B cell (primary cell): ENCODE measurements at regions of chr1 and their contacts with region 1.

Region 1: DNA sequence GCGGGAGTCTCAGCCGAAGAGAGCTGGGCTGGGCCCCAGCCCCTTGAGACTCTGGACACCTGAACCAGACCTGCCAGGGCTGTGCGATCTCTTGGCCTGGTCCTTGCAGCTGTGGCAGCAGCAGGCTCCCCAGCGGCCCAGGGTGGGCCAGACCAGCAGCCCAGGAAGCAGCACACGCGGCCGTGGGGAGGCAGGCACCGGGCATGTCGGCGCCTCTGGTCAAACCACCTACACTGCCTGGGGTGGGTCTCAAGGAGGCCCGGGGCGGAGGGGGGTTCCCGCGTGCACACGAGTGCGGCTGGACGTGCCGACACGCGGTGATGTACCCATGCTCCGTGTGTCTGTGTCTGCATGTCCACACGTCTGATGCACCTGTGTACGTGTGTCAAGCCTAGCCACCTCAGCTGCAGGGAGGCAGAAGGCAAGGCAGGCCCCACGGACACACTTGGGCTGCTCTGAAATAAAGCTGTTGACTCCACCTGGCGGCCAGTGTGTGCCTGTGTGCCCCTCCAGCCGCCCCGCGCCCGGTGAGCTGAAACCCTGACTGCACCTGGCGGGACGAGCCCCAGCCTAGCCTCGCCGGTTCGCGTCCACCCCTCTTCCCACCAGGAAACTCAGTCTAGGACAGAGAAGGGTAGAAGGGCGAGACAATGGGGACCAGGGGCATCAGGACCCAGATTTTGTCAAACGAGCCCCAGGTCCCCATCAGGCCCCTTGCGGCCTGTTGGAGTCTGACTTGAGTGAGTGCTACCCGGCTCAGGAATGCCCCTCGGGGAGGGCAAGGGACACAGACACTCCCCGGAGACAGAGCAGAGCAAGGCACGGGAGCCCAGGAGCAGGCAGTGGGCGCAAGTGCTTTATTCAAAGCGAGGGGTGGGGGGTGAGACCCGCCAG is 11.6 kb downstream of the SCNN1D start:
- DNase-seq: peak; percentile 87
- ATAC-seq: peak; percentile 84
- H3K4me3 ChIP-seq: no peak overlapping the region
- H3K4me3 Mint-ChIP-seq: no peak overlapping the region
- H3K27ac ChIP-seq: no peak overlapping the region
- H3K27ac Mint-ChIP-seq: peak overlapping the region; percentile 50
- H3K4me1 ChIP-seq: peaks cover 0 to 16% of the 10 kb centered on the region in 2 donors
- H3K4me1 Mint-ChIP-seq: peaks cover 11% of the 10 kb centered on the region
- H3K27me3 ChIP-seq: no peaks in the 10 kb centered on the region
- H3K27me3 Mint-ChIP-seq: no peaks in the 10 kb centered on the region
- CTCF ChIP-seq: peak; percentile 74

Region 2: DNA sequence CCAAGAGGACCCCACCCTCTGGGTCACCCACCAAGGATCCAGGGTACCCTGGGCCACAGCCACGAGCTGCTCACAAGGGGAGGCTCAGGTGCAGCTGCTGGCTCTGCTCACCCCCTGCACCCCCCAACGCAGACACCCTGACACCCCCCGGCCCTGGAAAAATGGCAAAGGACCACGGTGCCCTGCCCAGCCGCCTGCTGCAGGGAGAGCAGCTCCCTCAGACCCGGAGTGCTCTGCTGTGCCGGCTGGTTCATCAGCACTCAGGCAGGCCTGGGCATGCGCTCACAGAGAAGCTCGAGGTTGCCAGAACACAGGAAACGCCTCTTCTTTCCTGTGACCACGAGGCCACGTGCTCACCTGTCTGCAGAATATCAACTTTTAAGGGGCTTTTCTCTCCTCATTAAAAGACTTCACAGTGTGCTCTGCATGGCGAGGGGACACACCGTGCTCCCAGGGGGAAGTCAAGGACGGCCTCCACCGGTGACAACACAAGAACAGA is 41.0 kb before region 1 on chr1:
- CTCF ChIA-PET with region 1: interaction called, 17 read pairs
- POLR2A ChIA-PET with region 1: no interaction called
- intact Hi-C with region 1: no loop called
- DNase-seq: peak; percentile 85
- ATAC-seq: peak; percentile 71
- H3K4me3 ChIP-seq: no peak overlapping the region
- H3K4me3 Mint-ChIP-seq: peak overlapping the region; percentile 63
- H3K27ac ChIP-seq: peak overlapping the region; percentile 11 to 84
- H3K27ac Mint-ChIP-seq: peak overlapping the region; percentile 88
- H3K4me1 ChIP-seq: peaks cover 27 to 30% of the 10 kb centered on the region in 2 donors
- H3K4me1 Mint-ChIP-seq: peaks cover 16% of the 10 kb centered on the region
- H3K27me3 ChIP-seq: peaks cover 0 to 16% (median 8%) of the 10 kb centered on the region in 4 experiments
- H3K27me3 Mint-ChIP-seq: no peaks in the 10 kb centered on the region
- CTCF ChIP-seq: no peak

Region 3: DNA sequence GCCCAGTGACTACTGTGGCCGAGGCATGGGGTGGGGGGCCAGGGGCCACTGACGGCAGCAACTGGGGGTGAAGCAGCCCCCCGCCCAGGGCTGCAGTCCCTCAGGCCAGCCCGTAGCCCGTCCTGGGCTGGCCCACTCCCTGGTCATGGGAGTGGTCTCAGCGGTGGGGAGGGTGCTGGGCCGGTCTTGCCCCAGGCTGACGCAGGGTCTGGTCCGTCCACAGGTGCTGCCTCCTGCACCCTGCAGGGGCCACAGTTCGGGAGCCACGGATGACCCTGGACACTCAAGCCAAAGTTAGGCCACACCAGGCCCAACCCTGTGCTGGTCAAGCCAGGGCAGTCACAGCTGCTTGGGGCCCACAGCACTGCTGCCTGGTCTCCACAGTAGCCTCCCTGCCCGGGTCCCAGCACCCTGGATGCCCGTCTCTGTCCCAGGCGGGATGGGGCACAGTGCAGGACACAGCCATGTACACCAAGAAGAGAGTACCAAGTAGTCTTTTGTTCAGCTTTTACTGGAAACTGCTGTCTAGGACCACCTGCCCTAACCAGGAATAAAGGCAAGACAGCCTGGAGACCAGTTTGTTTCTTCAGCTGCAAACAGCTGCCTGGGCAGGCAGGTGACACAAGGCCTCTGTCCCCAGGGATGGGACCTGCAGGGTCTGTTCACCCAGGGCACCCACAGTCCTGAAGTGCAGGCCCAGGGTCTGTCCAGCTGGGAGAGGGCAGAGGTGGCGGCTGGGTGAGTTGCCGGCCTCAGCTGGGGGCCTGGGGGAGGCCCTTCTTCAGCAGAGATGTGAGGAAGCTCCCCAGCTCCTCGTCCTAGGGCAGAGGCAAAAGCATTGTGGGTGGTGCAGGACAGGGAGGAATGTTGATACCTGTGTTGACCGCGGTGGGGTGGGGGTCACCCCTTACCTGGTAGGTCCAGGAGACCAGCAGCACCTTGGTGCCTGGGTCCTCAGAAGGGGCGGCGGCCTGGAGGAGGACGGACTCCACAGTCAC is 19.6 kb after region 1 on chr1:
- CTCF ChIA-PET with region 1: no interaction called
- POLR2A ChIA-PET with region 1: no interaction called
- intact Hi-C with region 1: no loop called
- DNase-seq: no peak
- ATAC-seq: no peak
- H3K4me3 ChIP-seq: no peak overlapping the region
- H3K4me3 Mint-ChIP-seq: no peak overlapping the region
- H3K27ac ChIP-seq: no peak overlapping the region
- H3K27ac Mint-ChIP-seq: no peak overlapping the region
- H3K4me1 ChIP-seq: peaks cover 15 to 19% of the 10 kb centered on the region in 2 donors
- H3K4me1 Mint-ChIP-seq: peaks cover 12% of the 10 kb centered on the region
- H3K27me3 ChIP-seq: no peaks in the 10 kb centered on the region
- H3K27me3 Mint-ChIP-seq: no peaks in the 10 kb centered on the region
- CTCF ChIP-seq: no peak

Region 4: DNA sequence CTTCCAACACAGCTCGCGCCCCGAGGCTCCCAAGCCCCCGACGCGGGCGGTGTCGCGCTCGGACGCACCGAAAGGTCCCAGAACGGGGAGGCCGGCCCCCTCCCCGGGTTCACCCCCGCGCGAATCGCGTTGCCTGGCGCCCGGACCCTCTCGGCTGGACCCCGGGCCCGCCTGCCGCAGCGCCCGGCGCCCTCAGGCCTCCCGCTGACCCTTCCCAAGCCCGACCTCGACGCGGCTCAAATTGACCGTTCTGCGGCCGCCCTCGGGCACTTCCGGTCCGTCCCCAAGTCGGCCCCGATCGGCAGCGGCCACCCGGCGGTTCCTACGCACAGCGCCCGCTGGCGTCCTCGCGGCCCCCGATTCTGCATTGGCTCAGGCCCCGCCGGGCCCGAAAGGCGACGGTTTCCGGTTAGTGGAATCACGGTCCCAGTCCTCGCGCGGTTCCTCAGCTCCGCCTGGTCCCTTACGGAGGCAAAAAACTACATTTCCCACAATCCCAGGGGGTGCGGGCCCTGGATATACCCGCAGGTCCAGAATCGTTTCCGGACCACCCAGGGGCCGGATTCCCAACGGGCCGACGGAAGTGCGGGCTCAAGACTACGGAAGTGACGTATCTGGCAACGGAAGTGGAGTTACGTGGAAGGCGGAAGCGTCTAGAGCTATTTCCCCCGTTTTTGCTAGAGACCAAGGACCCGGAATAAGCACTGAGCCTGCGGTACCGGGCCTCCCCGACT is 83.3 kb after region 1 on chr1 and contains the start of gene AURKAIP1:
- CTCF ChIA-PET with region 1: no interaction called
- POLR2A ChIA-PET with region 1: no interaction called
- intact Hi-C with region 1: no loop called
- DNase-seq: peak; percentile 100
- ATAC-seq: peak; percentile 89
- H3K4me3 ChIP-seq: peak within 1 kb of the TSS; percentile 61 to 93 (median 78)
- H3K4me3 Mint-ChIP-seq: peak within 1 kb of the TSS; percentile 84
- H3K27ac ChIP-seq: peak within 1 kb of the TSS; percentile 75 to 95
- H3K27ac Mint-ChIP-seq: peak within 1 kb of the TSS; percentile 89
- H3K4me1 ChIP-seq: peaks cover 19 to 37% of the 10 kb centered on the region in 2 donors
- H3K4me1 Mint-ChIP-seq: peaks cover 11% of the 10 kb centered on the region
- H3K27me3 ChIP-seq: no peaks in the 10 kb centered on the region
- H3K27me3 Mint-ChIP-seq: no peaks in the 10 kb centered on the region
- CTCF ChIP-seq: peak; percentile 39
- total RNA-seq, gene AURKAIP1: 61.7 and 67.0 TPM in 2 replicates

Region 5: DNA sequence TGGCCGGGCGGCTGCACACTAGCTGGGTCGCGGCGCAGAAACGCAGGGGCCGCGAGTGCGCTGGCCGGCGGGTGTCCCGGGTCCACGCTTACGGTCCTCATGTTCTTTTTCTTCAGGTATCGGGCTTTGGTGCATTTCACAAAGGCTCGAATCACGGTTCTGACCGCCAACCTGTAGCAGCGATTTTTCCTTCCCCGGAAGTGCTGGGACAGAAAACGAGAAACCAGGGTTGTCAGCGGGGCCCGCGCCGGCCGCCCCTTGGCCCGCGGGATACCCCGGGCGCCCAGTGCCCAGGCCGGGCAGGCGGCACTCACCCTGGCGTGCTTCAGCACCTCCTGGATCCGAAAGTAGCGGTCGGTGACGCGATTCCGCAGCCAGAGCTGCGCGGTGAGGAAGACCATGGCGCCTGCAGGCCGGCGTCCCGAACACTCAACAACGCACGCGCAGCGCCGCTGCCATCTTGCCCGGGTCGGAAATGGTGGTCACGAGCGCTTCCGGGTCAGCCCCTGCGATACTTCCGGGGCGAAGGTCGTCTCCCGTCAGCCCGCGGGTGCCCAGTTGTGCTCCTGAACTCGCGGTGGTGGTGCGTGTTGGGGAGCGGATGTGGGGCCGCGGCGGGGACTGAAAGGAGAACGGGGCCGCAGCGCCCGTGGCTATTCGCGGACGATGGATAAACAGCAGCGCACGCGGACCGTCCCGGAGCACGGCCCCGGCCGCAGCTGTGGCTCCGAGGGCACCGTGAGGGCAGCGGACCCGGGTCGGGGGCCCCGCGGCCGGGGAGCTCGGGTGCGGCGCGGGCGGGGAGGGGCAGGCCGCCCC is 115.2 kb after region 1 on chr1 and contains the start of gene MRPL20:
- CTCF ChIA-PET with region 1: no interaction called
- POLR2A ChIA-PET with region 1: no interaction called
- intact Hi-C with region 1: no loop called
- DNase-seq: peak; percentile 96
- ATAC-seq: peak; percentile 95
- H3K4me3 ChIP-seq: peak within 1 kb of the TSS; percentile 70 to 98 (median 90)
- H3K4me3 Mint-ChIP-seq: peak within 1 kb of the TSS; percentile 90
- H3K27ac ChIP-seq: peak within 1 kb of the TSS; percentile 69 to 87
- H3K27ac Mint-ChIP-seq: peak within 1 kb of the TSS; percentile 91
- H3K4me1 ChIP-seq: peaks cover 21 to 26% of the 10 kb centered on the region in 2 donors
- H3K4me1 Mint-ChIP-seq: peaks cover 37% of the 10 kb centered on the region
- H3K27me3 ChIP-seq: no peaks in the 10 kb centered on the region
- H3K27me3 Mint-ChIP-seq: no peaks in the 10 kb centered on the region
- CTCF ChIP-seq: peak; percentile 15
- total RNA-seq, gene MRPL20: 119 and 129 TPM in 2 replicates

Region 6: DNA sequence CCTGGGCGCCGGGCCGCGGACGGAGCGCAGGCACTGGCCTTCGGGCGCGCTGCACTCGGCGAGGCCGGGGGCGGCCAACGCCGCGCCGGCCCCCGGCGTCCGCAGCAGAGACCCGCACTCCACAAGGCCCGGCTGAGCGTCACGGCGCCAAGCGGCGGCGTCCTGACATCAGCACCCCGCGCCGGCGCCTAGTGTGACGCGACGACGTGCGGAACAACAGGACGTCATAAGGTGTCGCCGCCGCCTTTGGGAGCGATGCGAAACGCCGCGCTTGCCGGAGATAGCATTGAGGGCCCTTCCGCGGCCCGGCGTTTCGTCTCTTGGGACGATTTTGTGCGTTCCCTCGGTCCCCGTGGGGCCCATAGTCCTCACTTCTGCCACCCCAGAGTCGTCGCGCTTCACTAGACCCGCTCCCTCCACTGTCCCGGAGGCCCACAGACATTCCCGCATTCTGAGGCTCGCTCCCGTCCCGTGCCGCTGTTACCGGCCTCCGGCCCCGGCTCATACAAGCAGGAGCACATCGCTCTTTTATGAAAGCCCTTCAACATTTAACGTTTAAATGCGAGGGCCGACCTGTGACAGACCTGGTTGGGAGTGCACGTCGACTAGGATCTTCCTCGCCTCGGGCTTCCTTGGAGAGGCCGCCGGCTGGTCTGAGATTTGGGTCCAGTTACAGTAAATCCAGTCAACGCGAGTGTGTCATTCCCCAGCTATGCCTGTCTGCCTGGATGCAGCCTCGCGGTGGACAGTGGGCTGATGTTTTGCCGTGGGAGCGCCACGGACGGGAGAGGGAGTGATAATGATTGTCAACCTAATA is 283.1 kb after region 1 on chr1 and contains the start of gene SSU72:
- CTCF ChIA-PET with region 1: no interaction called
- POLR2A ChIA-PET with region 1: no interaction called
- intact Hi-C with region 1: no loop called
- DNase-seq: peak; percentile 97
- ATAC-seq: peak; percentile 85
- H3K4me3 ChIP-seq: peak within 1 kb of the TSS; percentile 83 to 99 (median 92)
- H3K4me3 Mint-ChIP-seq: peak within 1 kb of the TSS; percentile 96
- H3K27ac ChIP-seq: peak within 1 kb of the TSS; percentile 99
- H3K27ac Mint-ChIP-seq: peak within 1 kb of the TSS; percentile 99
- H3K4me1 ChIP-seq: peaks cover 11 to 27% of the 10 kb centered on the region in 2 donors
- H3K4me1 Mint-ChIP-seq: peaks cover 30% of the 10 kb centered on the region
- H3K27me3 ChIP-seq: peaks cover 0 to 4% (median 1%) of the 10 kb centered on the region in 4 experiments
- H3K27me3 Mint-ChIP-seq: no peaks in the 10 kb centered on the region
- CTCF ChIP-seq: no peak
- total RNA-seq, gene SSU72: 111 and 112 TPM in 2 replicates